ENCODE measurements at regions of chr10 and their contacts with region 1.

Region 1: DNA sequence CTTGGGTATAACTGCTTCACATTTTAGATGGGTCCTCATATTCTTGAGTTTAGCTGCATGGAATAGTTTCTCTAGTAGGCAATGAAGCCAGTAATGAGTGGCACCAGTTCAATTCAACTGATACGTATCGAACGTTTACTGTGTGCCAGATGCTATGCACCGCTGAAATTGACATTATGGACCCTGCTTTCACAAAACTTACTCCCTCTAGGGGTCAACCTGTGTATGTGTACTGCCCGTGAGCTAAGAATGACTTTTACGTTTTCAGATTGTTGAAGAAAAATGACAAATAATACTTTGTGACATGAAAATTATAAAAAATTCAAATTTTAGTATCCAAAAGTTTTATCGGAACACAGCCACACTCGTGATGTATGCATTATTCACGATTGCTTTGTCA is 95.5 kb downstream of the ZMYND11 start:
- DNase-seq: peak; percentile 17 to 37
- ATAC-seq: peak in 1 of 2 experiments; percentile 86; a peak in 3 of 6 replicates
- H3K4me3 ChIP-seq: no peak overlapping the region
- H3K27ac ChIP-seq: no peak overlapping the region
- H3K4me1 ChIP-seq: no peaks in the 10 kb centered on the region
- CTCF ChIP-seq: peak; percentile 48
- EP300 ChIP-seq: no peak
- POLR2A ChIP-seq: no peak
- RAD21 ChIP-seq: peak in 1 of 2 experiments; percentile 26; a peak in 2 of 5 replicates

Region 2: GRCh38 chr10:248307-248706 is 17.6 kb after region 1 on chr10:
- CTCF ChIA-PET with region 1: interaction called, 10 read pairs
- POLR2A ChIA-PET with region 1: no interaction called
- DNase-seq: no peak
- ATAC-seq: no peak
- H3K4me3 ChIP-seq: no peak overlapping the region
- H3K27ac ChIP-seq: no peak overlapping the region
- H3K4me1 ChIP-seq: no peaks in the 10 kb centered on the region
- CTCF ChIP-seq: no peak
- EP300 ChIP-seq: no peak
- POLR2A ChIP-seq: no peak
- RAD21 ChIP-seq: no peak